ENCODE measurements at regions of chr2 and their contacts with region 1.

Region 1: GRCh38 chr2:48946449-48947048 is 191.0 kb upstream of the LHCGR start:
- DNase-seq: peak; percentile 13
- H3K4me3 Mint-ChIP-seq: no peak overlapping the region
- H3K27ac Mint-ChIP-seq: no peak overlapping the region
- H3K4me1 Mint-ChIP-seq: no peaks in the 10 kb centered on the region
- H3K27me3 Mint-ChIP-seq: peaks cover 2% of the 10 kb centered on the region

Region 2: GRCh38 chr2:48600204-48600813 is 346.2 kb before region 1 on chr2:
- CTCF ChIA-PET with region 1: no interaction called
- POLR2A ChIA-PET with region 1: no interaction called
- intact Hi-C with region 1: loop called (anchors 5 kb)
- DNase-seq: no peak
- H3K4me3 Mint-ChIP-seq: no peak overlapping the region
- H3K27ac Mint-ChIP-seq: no peak overlapping the region
- H3K4me1 Mint-ChIP-seq: no peaks in the 10 kb centered on the region
- H3K27me3 Mint-ChIP-seq: peaks cover 4% of the 10 kb centered on the region

Region 3: DNA sequence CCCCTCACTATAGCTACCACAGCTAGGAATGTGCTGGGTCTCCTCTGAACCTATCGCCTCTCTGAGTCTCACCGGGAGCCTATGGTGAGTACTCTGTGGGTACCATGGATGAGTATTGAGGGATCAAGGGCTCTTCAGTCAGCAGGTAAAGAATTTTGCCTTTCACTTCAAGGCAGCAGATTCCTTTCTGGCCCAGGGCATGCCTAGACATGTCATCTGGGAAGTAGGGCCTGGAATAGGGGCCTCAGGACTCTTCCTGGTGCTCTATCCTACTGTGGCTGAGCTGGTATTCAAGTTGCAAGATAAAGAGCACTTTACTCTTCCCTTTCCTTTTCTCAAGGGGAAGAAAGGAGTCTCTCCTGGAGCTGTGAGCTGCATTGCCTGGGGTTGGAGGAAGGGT is 105.4 kb before region 1 on chr2:
- CTCF ChIA-PET with region 1: no interaction called
- POLR2A ChIA-PET with region 1: no interaction called
- intact Hi-C with region 1: no loop called
- DNase-seq: no peak
- H3K4me3 Mint-ChIP-seq: no peak overlapping the region
- H3K27ac Mint-ChIP-seq: no peak overlapping the region
- H3K4me1 Mint-ChIP-seq: no peaks in the 10 kb centered on the region
- H3K27me3 Mint-ChIP-seq: peaks cover 4% of the 10 kb centered on the region

Region 4: DNA sequence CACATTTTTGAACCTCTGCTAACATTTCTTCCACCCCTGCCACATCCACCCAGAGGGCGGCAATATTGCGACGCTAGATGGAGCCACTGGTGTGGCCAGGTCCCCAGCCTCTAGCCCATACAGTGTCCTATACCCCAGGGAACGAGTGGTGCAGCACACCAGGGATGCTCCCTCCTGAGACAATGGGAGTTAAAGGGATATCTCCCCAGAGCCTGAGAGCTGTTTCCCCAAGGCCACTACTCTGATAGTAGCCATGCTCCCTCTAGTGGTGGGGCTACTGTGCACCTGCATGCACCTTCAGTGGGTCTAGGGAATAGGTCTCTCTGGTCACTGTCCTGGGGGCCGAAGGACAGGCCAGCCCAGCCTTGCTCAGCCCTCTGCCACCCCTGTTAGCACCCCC is 544.2 kb after region 1 on chr2:
- CTCF ChIA-PET with region 1: no interaction called
- POLR2A ChIA-PET with region 1: no interaction called
- intact Hi-C with region 1: loop called (anchors 10 kb)
- DNase-seq: no peak
- H3K4me3 Mint-ChIP-seq: no peak overlapping the region
- H3K27ac Mint-ChIP-seq: no peak overlapping the region
- H3K4me1 Mint-ChIP-seq: no peaks in the 10 kb centered on the region
- H3K27me3 Mint-ChIP-seq: no peaks in the 10 kb centered on the region

Region 5: GRCh38 chr2:50143822-50144575 is 1197.5 kb after region 1 on chr2:
- CTCF ChIA-PET with region 1: interaction called, 5 read pairs
- POLR2A ChIA-PET with region 1: no interaction called
- intact Hi-C with region 1: loop called (anchors 1 kb)
- DNase-seq: no peak
- H3K4me3 Mint-ChIP-seq: peak overlapping the region; percentile 36
- H3K27ac Mint-ChIP-seq: no peak overlapping the region
- H3K4me1 Mint-ChIP-seq: no peaks in the 10 kb centered on the region
- H3K27me3 Mint-ChIP-seq: no peaks in the 10 kb centered on the region

Region 6: GRCh38 chr2:50401772-50402653 is 1455.5 kb after region 1 on chr2:
- CTCF ChIA-PET with region 1: interaction called, 6 read pairs
- POLR2A ChIA-PET with region 1: no interaction called
- intact Hi-C with region 1: loop called (anchors 1 kb)
- DNase-seq: peak; percentile 42
- H3K4me3 Mint-ChIP-seq: no peak overlapping the region
- H3K27ac Mint-ChIP-seq: no peak overlapping the region
- H3K4me1 Mint-ChIP-seq: no peaks in the 10 kb centered on the region
- H3K27me3 Mint-ChIP-seq: no peaks in the 10 kb centered on the region

Region 7: DNA sequence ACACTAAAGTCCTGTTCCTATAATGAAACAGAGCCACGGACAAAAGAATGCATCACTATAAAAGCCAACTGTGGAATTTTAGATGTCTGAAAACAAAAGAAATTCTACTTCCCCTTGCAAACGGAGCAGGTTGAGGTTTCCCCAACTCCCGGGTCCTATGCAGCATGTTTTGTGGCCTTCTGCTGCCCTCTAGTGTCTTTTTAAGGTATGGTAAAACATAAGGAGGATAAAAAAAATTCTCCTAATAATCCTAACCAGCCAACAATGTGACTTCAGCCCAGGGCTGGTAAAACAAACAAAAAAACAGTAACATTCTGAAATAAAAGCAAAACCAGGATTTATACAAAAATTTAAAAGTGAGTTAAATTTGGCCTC is 1545.9 kb after region 1 on chr2:
- CTCF ChIA-PET with region 1: interaction called, 15 read pairs
- POLR2A ChIA-PET with region 1: no interaction called
- intact Hi-C with region 1: no loop called
- DNase-seq: peak; percentile 17
- H3K4me3 Mint-ChIP-seq: no peak overlapping the region
- H3K27ac Mint-ChIP-seq: no peak overlapping the region
- H3K4me1 Mint-ChIP-seq: peaks cover 18% of the 10 kb centered on the region
- H3K27me3 Mint-ChIP-seq: no peaks in the 10 kb centered on the region

Measured in activated CD4-positive, alpha-beta memory T cell treated with anti-CD3 and anti-CD28 coated beads for 36 hours (primary cell).